Posterior vena cava (tissue), 2 donors: ENCODE measurements at regions of chrX and their contacts with region 1.

Region 1: GRCh38 chrX:16826207-16826606 is 39.9 kb downstream of the TXLNG start:
- DNase-seq: no peak

Region 2: GRCh38 chrX:17046478-17047097 is 220.4 kb after region 1 on chrX:
- intact Hi-C with region 1: loop called in 1 of 2 experiments (anchors 5 kb)
- DNase-seq: no peak